ENCODE measurements at regions of chr15 and their contacts with region 1.

Region 1: GRCh38 chr15:89416141-89416853 is 80.1 kb downstream of the RHCG start:
- DNase-seq: peak; percentile 82
- H3K4me3 Mint-ChIP-seq: no peak overlapping the region
- H3K27ac Mint-ChIP-seq: no peak overlapping the region
- H3K4me1 Mint-ChIP-seq: peaks cover 7% of the 10 kb centered on the region
- H3K27me3 Mint-ChIP-seq: peaks cover 96% of the 10 kb centered on the region

Region 2: DNA sequence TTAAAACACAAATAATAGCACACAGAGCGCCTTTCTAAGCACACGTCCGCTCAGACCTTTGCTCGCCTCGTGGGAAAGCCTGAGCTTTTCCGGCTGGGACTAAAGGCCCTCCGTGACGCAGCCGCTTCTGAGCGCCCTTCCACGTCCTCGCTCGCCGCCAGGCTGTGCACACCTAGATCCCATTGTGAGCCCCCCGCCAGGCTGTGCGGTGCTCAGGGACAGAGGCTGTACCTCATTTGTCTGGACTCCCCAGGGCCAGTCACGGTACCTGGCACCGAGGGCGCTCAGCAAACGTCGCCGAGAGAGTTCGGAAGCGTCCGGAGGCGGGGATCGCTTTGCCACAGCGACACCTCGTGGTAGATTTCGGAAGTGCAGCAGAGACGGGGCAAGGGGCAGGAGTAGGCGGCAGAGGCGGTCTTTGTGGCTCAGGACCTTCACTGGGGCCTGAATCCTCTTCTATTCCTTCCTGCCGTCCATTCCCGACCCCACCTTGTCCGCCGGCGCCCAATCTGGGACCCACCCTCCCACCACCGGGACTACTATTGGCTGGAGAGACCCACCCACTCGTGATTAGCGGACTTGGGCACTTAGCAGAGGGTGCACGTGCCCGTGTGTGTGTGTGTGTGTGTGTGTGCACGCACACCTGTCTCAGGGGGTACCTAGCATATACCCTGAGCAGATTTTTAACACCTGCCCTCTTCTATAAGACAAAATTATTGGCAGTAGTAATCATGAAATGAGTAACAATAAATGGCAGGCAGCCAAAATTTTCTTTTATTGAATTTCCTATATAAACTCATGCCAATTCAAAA is 14.4 kb after region 1 on chr15:
- CTCF ChIA-PET with region 1: interaction called, 15 read pairs
- DNase-seq: peak; percentile 88
- H3K4me3 Mint-ChIP-seq: peak overlapping the region; percentile 67
- H3K27ac Mint-ChIP-seq: no peak overlapping the region
- H3K4me1 Mint-ChIP-seq: peaks cover 4% of the 10 kb centered on the region
- H3K27me3 Mint-ChIP-seq: peaks cover 74% of the 10 kb centered on the region

Region 3: DNA sequence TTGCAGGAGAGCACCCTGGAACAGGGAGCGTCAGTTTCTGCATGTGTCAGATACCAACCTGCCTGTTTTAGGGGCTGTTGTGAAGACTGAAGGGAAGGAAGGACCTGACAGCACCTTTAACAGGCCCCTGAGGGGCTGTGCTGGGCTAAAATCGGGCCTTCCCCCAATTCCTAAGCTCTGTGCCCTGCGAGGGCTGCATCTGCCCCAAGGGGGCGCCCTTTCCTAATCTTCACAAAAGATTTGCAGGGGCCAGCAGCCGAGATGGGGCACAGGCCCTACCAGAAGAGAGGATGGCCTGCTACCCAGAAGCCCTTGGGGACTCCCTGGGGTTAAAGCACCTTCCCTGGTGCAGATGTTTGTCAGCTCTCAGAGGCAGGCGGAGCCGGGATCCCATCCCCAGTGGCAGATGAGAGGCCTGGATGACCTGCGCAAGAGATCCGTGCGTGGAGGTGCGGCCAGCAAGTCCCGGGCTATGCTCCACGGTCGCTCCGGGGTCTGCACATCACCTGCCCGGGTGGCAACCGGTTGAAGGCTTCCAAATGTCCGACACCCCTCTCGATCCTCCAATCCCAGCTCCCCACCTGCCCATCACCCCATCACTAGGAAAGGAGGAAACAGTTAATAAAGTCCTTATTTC is 26.5 kb after region 1 on chr15:
- CTCF ChIA-PET with region 1: interaction called, 11 read pairs
- DNase-seq: peak; percentile 69
- H3K4me3 Mint-ChIP-seq: no peak overlapping the region
- H3K27ac Mint-ChIP-seq: no peak overlapping the region
- H3K4me1 Mint-ChIP-seq: no peaks in the 10 kb centered on the region
- H3K27me3 Mint-ChIP-seq: peaks cover 53% of the 10 kb centered on the region

Region 4: DNA sequence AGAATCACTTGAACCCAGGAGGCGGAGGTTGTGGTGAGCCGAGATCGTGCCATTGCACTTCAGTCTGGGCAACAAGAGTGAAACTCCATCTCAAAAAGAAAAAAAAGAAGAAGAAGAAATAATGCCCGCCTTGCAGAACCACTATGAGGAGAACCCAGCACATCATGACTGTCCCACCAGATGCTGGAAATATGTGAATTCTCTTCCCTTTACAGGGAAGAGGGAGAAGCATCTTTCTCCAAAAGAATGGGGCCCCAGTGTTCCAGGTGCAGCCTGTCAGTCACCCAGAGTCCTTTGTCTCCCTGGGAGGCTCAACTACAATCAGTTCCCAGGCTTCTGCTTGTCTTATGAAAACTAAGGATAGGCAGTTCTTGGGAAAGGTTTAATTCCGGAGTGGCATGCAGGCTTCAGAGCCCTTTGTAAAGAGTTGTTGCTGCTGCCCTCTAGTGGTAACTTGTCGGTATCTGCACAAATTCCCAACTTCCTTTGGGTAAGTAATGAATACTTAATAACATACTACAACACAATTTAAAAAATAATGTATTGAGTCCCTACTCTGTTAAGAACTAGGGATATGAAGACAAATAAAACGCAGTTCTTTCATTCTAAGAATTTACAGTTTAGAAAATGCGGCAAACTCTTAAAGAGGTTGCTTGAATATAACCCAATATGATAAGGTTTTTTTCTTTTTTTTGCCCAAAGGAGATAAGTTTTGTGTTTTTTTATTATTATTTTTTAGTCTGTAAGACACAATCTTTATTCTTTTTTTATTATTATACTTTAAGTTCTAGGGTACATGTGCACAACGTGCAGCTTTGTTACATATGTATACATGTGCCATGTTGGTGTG is 140.3 kb after region 1 on chr15:
- CTCF ChIA-PET with region 1: no interaction called
- DNase-seq: peak; percentile 57
- H3K4me3 Mint-ChIP-seq: no peak overlapping the region
- H3K27ac Mint-ChIP-seq: no peak overlapping the region
- H3K4me1 Mint-ChIP-seq: no peaks in the 10 kb centered on the region
- H3K27me3 Mint-ChIP-seq: peaks cover 33% of the 10 kb centered on the region

Region 5: GRCh38 chr15:89820666-89821611 is 404.6 kb after region 1 on chr15:
- CTCF ChIA-PET with region 1: no interaction called
- DNase-seq: no peak
- H3K4me3 Mint-ChIP-seq: no peak overlapping the region
- H3K27ac Mint-ChIP-seq: no peak overlapping the region
- H3K4me1 Mint-ChIP-seq: no peaks in the 10 kb centered on the region
- H3K27me3 Mint-ChIP-seq: peaks cover 50% of the 10 kb centered on the region

Region 6: DNA sequence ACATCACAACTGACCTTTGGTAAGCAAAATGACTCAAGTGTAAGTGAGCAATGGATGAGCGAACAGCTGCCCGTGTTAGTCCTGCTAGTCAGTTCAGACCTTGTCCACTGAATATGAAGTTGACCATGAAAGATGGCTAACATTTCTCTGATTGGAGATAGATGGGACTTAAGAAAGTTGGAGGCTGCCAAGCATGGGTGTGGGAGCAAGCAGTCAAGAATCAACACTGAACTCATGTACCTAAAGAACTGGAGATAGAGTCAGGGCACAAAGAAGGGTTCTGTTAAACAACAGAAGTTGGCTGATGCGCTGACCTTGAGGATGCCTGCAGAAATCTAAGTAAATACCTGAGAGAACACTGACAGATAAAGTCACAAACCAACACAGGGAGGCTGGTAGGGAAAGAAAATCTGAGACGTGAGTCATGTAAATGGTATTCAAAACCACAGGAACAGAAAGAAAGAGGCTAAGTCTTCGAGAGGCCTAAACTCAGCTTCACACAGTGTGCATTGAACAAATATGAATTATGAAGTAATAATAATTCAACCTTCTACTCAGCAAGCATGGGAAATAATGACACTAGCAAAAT is 429.1 kb after region 1 on chr15:
- CTCF ChIA-PET with region 1: no interaction called
- DNase-seq: no peak
- H3K4me3 Mint-ChIP-seq: no peak overlapping the region
- H3K27ac Mint-ChIP-seq: no peak overlapping the region
- H3K4me1 Mint-ChIP-seq: peaks cover 5% of the 10 kb centered on the region
- H3K27me3 Mint-ChIP-seq: no peaks in the 10 kb centered on the region